ENCODE measurements at regions of chr9 and their contacts with region 1.

Region 1: DNA sequence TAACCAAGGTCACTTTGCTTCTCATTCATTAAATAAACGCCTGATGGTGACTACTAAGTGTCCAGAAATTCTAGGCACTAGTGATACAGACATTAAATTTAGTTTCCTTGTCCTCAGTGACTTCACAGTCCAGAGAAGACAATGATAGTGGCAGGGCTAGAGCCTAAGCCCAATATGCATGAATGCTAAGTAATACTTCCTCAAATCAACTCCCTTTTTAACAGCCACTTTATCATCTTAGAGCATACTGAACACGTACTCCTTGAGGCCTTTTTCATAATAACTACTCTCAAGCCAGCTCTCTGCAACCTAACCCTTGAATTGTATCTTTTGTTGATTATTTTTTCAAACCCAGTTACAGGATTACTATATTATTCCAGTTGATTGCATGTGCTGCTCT is 74.1 kb downstream of the STX17 start:
- DNase-seq: no peak
- H3K4me3 ChIP-seq: no peak overlapping the region
- H3K27ac ChIP-seq: no peak overlapping the region
- H3K4me1 ChIP-seq: no peaks in the 10 kb centered on the region
- H3K27me3 ChIP-seq: no peaks in the 10 kb centered on the region
- CTCF ChIP-seq: no peak

Region 2: GRCh38 chr9:99954819-99955218 is 25.8 kb before region 1 on chr9:
- intact Hi-C with region 1: loop called (anchors 2 kb)
- DNase-seq: no peak
- H3K4me3 ChIP-seq: no peak overlapping the region
- H3K27ac ChIP-seq: no peak overlapping the region
- H3K4me1 ChIP-seq: no peaks in the 10 kb centered on the region
- H3K27me3 ChIP-seq: no peaks in the 10 kb centered on the region
- CTCF ChIP-seq: no peak

Region 3: GRCh38 chr9:100277166-100277979 is 296.8 kb after region 1 on chr9:
- intact Hi-C with region 1: no loop called
- DNase-seq: no peak
- H3K4me3 ChIP-seq: no peak overlapping the region
- H3K27ac ChIP-seq: no peak overlapping the region
- H3K4me1 ChIP-seq: no peaks in the 10 kb centered on the region
- H3K27me3 ChIP-seq: no peaks in the 10 kb centered on the region
- CTCF ChIP-seq: no peak